Common myeloid progenitor, CD34-positive (primary cell): ENCODE measurements at regions of chr17 and their contacts with region 1.

Region 1: GRCh38 chr17:27601069-27601975 is 29.7 kb upstream of the LGALS9 start:
- DNase-seq: peak; percentile 82 to 92 (median 85)
- H3K4me3 ChIP-seq: no peak overlapping the region
- H3K27ac ChIP-seq: no peak overlapping the region
- H3K4me1 ChIP-seq: peaks cover 0 to 23% (median 21%) of the 10 kb centered on the region in 4 experiments
- H3K27me3 ChIP-seq: no peaks in the 10 kb centered on the region

Region 2: GRCh38 chr17:27332485-27333409 is 268.6 kb before region 1 on chr17:
- CTCF ChIA-PET with region 1: interaction called, 11 read pairs
- POLR2A ChIA-PET with region 1: no interaction called
- DNase-seq: peak; percentile 96 to 98 (median 97)
- H3K4me3 ChIP-seq: peak overlapping the region; percentile 45 to 82 (median 68)
- H3K27ac ChIP-seq: peak overlapping the region; percentile 40 to 80
- H3K4me1 ChIP-seq: peaks cover 4 to 41% (median 29%) of the 10 kb centered on the region in 4 experiments
- H3K27me3 ChIP-seq: no peaks in the 10 kb centered on the region

Region 3: DNA sequence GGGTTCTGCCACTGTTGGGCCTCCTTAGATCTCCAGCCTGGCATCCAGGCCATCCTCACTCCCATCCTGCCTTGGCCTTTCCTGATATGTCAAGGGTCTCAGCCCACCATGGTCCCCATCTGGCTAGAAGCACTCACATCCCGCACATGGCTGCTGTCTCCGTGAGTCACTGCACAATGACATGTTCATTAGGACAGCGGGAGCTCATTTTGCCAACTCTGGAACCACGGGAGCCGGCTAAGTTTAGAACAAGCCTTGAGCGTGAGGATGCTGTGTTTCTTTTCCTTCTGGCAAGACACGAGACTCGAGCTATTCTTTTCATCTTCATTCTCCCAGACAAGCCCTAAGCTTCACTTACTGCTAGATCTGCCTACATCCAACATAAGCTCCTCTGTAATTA is 210.8 kb before region 1 on chr17:
- CTCF ChIA-PET with region 1: interaction called, 92 read pairs
- POLR2A ChIA-PET with region 1: no interaction called
- DNase-seq: no peak
- H3K4me3 ChIP-seq: no peak overlapping the region
- H3K27ac ChIP-seq: no peak overlapping the region
- H3K4me1 ChIP-seq: peaks cover 0 to 14% (median 8%) of the 10 kb centered on the region in 4 experiments
- H3K27me3 ChIP-seq: peaks cover 0 to 2% (median 0%) of the 10 kb centered on the region in 5 experiments

Region 4: GRCh38 chr17:27455914-27456680 is 145.2 kb before region 1 on chr17 and contains the start of gene KSR1:
- CTCF ChIA-PET with region 1: interaction called, 57 read pairs
- POLR2A ChIA-PET with region 1: interaction called, 8 read pairs
- DNase-seq: peak; percentile 87 to 94 (median 89)
- H3K4me3 ChIP-seq: peak within 1 kb of the TSS; percentile 46 to 92 (median 77)
- H3K27ac ChIP-seq: peak within 1 kb of the TSS in 1 of 2 experiments; percentile 57
- H3K4me1 ChIP-seq: peaks cover 3 to 29% (median 24%) of the 10 kb centered on the region in 4 experiments
- H3K27me3 ChIP-seq: no peaks in the 10 kb centered on the region

Region 5: GRCh38 chr17:27569257-27569722 is 32.0 kb before region 1 on chr17:
- CTCF ChIA-PET with region 1: interaction called, 126 read pairs
- POLR2A ChIA-PET with region 1: no interaction called
- DNase-seq: peak; percentile 57 to 76 (median 71)
- H3K4me3 ChIP-seq: no peak overlapping the region
- H3K27ac ChIP-seq: peak overlapping the region in 1 of 2 experiments; percentile 37
- H3K4me1 ChIP-seq: peaks cover 0 to 61% (median 24%) of the 10 kb centered on the region in 4 experiments
- H3K27me3 ChIP-seq: no peaks in the 10 kb centered on the region

Region 6: GRCh38 chr17:27647765-27648164 is 46.4 kb after region 1 on chr17:
- CTCF ChIA-PET with region 1: interaction called, 102 read pairs
- POLR2A ChIA-PET with region 1: no interaction called
- DNase-seq: no peak
- H3K4me3 ChIP-seq: no peak overlapping the region
- H3K27ac ChIP-seq: no peak overlapping the region
- H3K4me1 ChIP-seq: no peaks in the 10 kb centered on the region
- H3K27me3 ChIP-seq: no peaks in the 10 kb centered on the region